Mammary epithelial cell (primary cell): ENCODE measurements at regions of chr2 and their contacts with region 1.

Region 1: DNA sequence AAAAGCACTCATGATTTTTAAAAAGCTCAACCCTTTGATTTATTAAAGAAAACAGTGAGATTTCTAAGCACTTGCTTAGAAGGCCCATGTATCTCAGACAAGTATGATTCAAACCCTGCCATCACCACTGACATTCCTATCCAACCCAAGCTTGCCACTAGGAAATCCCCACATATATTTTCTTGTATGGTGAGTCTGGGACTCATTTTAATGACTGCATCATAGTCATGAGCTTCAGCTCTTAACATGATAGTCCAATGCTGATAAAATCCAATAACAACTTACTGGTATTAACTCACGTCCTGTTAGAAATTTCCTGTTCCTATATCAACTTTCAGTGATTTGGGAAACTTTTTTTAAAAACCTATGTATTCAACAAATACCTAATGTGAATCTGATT is 39.4 kb upstream of the NCKAP5 start:
- DNase-seq: peak; percentile 84
- H3K4me3 ChIP-seq: no peak overlapping the region
- H3K27ac ChIP-seq: no peak overlapping the region
- H3K4me1 ChIP-seq: no peaks in the 10 kb centered on the region
- H3K27me3 ChIP-seq: no peaks in the 10 kb centered on the region
- CTCF ChIP-seq: no peak

Region 2: DNA sequence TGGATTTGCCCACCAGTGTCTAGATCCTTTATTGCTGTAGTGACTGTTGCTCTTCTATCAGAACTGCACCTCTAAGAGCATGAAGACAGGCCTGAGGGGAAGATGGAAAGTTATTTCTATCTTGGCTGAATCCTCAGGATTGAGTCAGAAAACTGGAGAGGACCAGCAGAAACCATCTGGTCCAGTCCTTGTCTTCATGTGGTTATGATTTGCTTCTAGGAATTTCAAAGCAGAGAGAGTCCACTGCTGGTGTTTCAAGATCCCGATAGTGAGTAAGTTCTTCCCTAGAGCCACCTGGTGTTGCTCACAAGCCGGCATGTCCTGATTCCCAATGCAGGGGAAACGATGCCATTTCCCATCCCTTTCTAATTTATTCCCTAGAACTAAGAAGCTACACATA is 123.6 kb before region 1 on chr2:
- CTCF ChIA-PET with region 1: no interaction called
- dilution Hi-C with region 1: no loop called
- in situ Hi-C with region 1: no loop called
- intact Hi-C with region 1: no loop called
- DNase-seq: peak; percentile 76
- H3K4me3 ChIP-seq: no peak overlapping the region
- H3K27ac ChIP-seq: no peak overlapping the region
- H3K4me1 ChIP-seq: peaks cover 9% of the 10 kb centered on the region
- H3K27me3 ChIP-seq: no peaks in the 10 kb centered on the region
- CTCF ChIP-seq: no peak

Region 3: GRCh38 chr2:133579274-133579673 is 28.4 kb before region 1 on chr2:
- CTCF ChIA-PET with region 1: no interaction called
- dilution Hi-C with region 1: no loop called
- in situ Hi-C with region 1: no loop called
- intact Hi-C with region 1: loop called (anchors 1 kb)
- DNase-seq: peak; percentile 95
- H3K4me3 ChIP-seq: peak overlapping the region in 2 of 3 experiments; percentile 5 to 18
- H3K27ac ChIP-seq: peak overlapping the region; percentile 22
- H3K4me1 ChIP-seq: peaks cover 42% of the 10 kb centered on the region
- H3K27me3 ChIP-seq: no peaks in the 10 kb centered on the region
- CTCF ChIP-seq: no peak

Region 4: GRCh38 chr2:133652398-133652797 is 44.7 kb after region 1 on chr2:
- CTCF ChIA-PET with region 1: no interaction called
- dilution Hi-C with region 1: no loop called
- in situ Hi-C with region 1: no loop called
- intact Hi-C with region 1: no loop called
- DNase-seq: no peak
- H3K4me3 ChIP-seq: no peak overlapping the region
- H3K27ac ChIP-seq: no peak overlapping the region
- H3K4me1 ChIP-seq: peaks cover 6% of the 10 kb centered on the region
- H3K27me3 ChIP-seq: no peaks in the 10 kb centered on the region
- CTCF ChIP-seq: no peak

Region 5: DNA sequence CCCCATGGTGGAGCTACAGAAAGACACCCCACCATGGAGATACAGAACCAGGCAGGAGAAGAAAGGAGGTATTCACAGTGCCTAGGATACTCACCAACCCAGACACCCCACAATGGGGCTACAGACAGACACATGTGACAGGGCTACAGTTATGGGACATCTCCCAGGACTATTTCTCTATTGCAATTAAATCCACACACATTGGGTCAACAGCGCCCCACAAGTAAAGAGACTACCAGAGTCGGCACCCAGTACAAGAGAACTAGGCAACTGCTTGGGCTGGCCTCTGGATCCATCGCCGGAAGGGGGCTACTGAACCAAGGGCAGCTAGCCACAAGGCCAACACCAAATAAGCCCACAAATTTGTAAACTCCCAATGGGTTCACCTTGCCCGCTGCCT is 270.6 kb after region 1 on chr2:
- CTCF ChIA-PET with region 1: no interaction called
- dilution Hi-C with region 1: no loop called
- in situ Hi-C with region 1: no loop called
- intact Hi-C with region 1: no loop called
- DNase-seq: no peak
- H3K4me3 ChIP-seq: no peak overlapping the region
- H3K27ac ChIP-seq: no peak overlapping the region
- H3K4me1 ChIP-seq: no peaks in the 10 kb centered on the region
- H3K27me3 ChIP-seq: peaks cover 8% of the 10 kb centered on the region
- CTCF ChIP-seq: no peak

Region 6: DNA sequence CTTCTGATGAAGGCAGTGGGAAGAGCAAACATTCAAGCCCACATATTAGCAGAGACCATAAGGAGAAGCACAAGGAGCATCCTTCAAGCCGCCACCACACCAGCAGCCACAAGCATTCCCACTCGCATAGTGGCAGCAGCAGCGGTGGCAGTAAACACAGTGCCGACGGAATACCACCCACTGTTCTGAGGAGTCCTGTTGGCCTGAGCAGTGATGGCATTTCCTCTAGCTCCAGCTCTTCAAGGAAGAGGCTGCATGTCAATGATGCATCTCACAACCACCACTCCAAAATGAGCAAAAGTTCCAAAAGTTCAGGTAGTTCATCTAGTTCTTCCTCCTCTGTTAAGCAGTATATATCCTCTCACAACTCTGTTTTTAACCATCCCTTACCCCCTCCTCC is 1346.4 kb after region 1 on chr2:
- CTCF ChIA-PET with region 1: no interaction called
- dilution Hi-C with region 1: no loop called
- in situ Hi-C with region 1: no loop called
- intact Hi-C with region 1: no loop called
- DNase-seq: no peak
- H3K4me3 ChIP-seq: no peak overlapping the region
- H3K27ac ChIP-seq: no peak overlapping the region
- H3K4me1 ChIP-seq: no peaks in the 10 kb centered on the region
- H3K27me3 ChIP-seq: no peaks in the 10 kb centered on the region
- CTCF ChIP-seq: no peak